Activated CD4-positive, alpha-beta T cell treated with anti-CD3 and anti-CD28 coated beads, Interleukin-2, amount 10 ng/mL, durations not matched to agents 7 days and 5 days (primary cell): ENCODE measurements at regions of chr2 and their contacts with region 1.

Region 1: DNA sequence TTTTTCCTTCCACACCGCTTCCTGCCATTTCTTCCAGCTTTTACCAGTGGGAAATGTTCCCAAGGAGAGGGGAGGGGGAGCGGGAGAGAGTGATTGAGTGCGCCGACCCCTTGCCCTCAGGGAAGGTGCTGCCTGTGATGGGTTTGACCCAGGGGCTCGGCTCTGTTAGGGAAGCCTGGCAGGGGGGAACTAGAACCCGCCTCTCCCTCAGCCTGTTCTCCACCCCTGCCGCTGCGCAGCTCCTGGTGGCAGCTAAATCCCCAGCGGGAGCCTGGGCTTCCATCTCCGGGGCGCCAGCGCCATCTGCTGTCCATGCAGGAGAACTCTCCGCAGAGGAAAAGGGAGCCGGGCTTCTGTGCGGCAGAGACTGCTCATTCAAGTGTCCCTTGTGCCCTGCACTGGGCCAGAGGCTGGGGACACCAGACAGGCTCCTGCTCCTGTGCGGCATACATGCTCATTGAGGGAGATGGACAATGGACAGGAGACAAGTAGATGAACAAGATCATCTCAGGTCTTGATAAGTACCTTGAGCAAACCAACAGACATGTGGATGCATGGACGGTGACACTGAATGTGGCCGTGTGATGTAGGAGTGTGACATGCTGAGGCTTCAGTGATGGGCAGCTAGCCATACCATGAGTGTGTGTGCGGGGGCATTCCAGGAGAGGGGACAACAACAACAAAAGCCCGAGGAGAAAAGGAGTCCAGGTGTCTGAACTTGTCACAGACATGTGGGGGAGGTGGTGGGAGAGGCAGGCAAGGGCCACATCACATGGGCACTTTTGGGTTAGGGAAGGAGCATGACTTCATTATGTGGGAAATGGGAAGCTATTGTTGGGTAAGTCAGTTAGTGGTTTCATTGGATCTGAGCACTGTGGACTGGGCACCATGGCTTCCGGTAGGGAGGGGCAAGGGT is 13.3 kb downstream of the CHPF start:
- DNase-seq: peak; percentile 87
- H3K4me3 Mint-ChIP-seq: no peak overlapping the region
- H3K27ac Mint-ChIP-seq: no peak overlapping the region
- H3K4me1 Mint-ChIP-seq: no peaks in the 10 kb centered on the region
- H3K27me3 Mint-ChIP-seq: peaks cover 49% of the 10 kb centered on the region

Region 2: GRCh38 chr2:219402665-219403515 is 127.4 kb before region 1 on chr2:
- CTCF ChIA-PET with region 1: interaction called, 20 read pairs
- POLR2A ChIA-PET with region 1: interaction called, 3 read pairs
- DNase-seq: peak; percentile 65
- H3K4me3 Mint-ChIP-seq: no peak overlapping the region
- H3K27ac Mint-ChIP-seq: no peak overlapping the region
- H3K4me1 Mint-ChIP-seq: no peaks in the 10 kb centered on the region
- H3K27me3 Mint-ChIP-seq: peaks cover 4% of the 10 kb centered on the region

Region 3: DNA sequence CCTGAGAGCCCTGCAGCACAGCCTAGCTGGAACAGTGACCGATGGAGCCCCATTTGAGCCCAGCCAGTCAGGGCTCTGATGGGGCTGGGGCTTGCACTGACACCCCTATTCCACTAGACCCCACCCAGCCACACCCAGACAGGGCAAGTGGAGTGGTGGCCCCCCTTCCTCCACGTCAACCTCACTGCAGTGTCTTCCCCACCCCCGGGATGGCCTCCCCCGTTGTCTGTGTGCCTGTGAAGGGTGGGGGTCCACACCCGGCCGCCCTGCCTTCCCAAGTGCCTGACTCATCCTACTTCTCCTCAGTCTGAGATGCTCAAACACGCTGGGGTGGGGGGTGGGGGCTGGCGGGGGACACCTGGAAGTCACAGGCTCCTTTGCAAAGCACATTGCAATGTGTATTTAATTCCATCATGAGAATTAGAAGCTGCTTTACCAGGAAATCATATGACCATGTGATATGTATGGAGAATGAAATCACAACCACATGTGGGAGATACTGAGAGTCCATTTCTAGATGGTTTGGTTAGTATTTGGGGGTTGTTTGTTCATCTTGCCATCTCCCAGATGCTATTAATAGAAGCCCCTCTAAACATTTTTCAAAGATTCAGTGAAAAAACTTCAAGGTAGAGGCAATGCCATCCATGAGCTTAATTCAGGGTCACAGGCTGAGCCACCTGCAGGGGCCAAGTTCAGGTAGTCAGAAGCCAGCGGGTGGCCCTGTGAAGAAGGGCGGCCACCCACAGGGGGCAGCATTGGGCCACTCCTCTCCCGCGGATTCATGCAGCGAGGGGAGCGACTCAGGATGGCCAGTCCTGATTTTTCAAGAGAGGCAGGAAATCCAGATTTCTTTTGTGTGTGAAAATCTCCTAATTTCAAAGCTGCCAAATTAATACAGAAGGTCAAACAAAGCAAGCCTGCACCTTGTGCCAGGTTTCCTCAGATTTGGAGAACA is 54.3 kb before region 1 on chr2:
- CTCF ChIA-PET with region 1: interaction called, 13 read pairs
- POLR2A ChIA-PET with region 1: no interaction called
- DNase-seq: peak; percentile 62
- H3K4me3 Mint-ChIP-seq: no peak overlapping the region
- H3K27ac Mint-ChIP-seq: no peak overlapping the region
- H3K4me1 Mint-ChIP-seq: peaks cover 4% of the 10 kb centered on the region
- H3K27me3 Mint-ChIP-seq: peaks cover 4% of the 10 kb centered on the region

Region 4: GRCh38 chr2:219492575-219492974 is 37.7 kb before region 1 on chr2:
- CTCF ChIA-PET with region 1: interaction called, 56 read pairs
- POLR2A ChIA-PET with region 1: no interaction called
- DNase-seq: no peak
- H3K4me3 Mint-ChIP-seq: no peak overlapping the region
- H3K27ac Mint-ChIP-seq: no peak overlapping the region
- H3K4me1 Mint-ChIP-seq: peaks cover 6% of the 10 kb centered on the region
- H3K27me3 Mint-ChIP-seq: peaks cover 44% of the 10 kb centered on the region

Region 5: DNA sequence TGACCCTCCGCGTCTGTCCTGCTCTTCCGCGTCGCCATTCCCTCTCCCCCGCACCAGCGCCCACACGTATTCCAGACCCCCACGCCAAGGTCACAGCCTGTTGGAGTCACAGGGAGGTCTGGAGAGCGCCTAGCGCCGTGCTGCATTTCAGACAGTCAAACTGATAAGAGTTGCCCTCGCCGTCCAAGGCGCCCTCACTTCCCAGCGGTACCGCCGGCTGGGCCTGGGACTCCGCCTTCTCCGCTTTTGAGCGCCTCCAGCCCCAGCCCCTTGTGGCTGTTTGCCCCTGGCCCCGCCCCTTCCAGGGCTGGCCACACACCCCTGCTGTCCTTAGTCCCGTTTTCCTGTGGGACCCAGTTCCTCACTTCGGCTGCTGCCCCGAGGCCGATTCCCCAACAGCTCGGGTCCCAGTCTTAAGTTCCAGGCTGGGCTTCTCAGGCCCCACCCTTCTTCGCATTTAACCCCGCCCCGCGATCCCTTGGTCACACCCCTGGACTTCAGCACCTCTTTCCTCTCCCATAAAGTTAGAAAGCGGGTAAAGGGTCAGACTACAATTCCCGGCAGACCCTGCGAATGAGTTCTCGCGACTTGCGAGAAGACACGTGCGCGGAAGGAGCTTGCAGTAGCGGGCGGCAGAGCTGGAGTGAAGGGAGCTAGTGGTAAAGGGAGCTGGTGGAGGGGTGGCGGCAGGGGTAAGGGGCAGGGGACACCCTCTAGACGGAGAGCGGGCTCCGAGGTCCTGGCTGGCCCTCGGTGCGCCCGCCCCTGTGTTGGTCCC is 31.8 kb before region 1 on chr2 and contains the start of gene GMPPA:
- CTCF ChIA-PET with region 1: interaction called, 56 read pairs
- POLR2A ChIA-PET with region 1: no interaction called
- DNase-seq: peak; percentile 97
- H3K4me3 Mint-ChIP-seq: peak within 1 kb of the TSS; percentile 85
- H3K27ac Mint-ChIP-seq: peak within 1 kb of the TSS; percentile 85
- H3K4me1 Mint-ChIP-seq: peaks cover 35% of the 10 kb centered on the region
- H3K27me3 Mint-ChIP-seq: peaks cover 40% of the 10 kb centered on the region
- total RNA-seq, gene GMPPA: 34.5 to 40.5 TPM

Region 6: DNA sequence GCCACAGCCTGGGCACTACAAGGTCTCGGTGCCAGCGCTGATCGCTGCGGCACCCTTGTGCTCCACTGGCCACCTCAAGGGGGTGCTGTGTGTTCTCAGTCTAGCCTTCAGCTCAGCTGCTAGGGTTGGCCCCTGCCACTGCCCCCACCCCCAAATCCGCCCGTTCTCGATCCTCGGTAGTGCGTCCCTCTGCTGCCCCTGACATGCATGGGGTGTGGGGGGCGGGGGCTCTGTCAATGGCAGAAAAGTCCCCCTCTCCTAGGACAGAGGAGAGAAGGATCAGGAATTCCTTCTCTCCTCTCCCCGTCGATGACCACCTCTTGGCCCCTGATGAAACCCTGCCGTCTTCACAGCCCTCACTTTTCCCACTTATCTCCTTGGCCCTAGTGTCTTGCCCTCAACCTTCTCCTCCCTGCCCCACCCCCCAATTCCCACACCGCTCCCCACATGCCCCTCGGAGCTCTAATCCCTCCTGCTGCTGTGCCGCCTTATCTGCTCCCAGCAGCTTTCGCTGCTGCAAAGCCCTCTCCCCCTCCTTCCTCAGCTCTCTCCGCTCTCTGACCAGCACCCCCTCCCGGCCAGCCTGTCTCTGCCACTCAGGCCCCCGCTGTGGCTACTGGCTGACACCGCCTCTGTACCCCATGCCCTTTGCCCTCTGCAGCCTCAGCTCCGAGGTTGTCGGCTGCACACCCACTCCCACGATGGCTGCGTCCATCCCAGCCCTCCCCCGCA is 20.4 kb before region 1 on chr2:
- CTCF ChIA-PET with region 1: interaction called, 11 read pairs
- POLR2A ChIA-PET with region 1: interaction called, 3 read pairs
- DNase-seq: peak; percentile 55
- H3K4me3 Mint-ChIP-seq: no peak overlapping the region
- H3K27ac Mint-ChIP-seq: no peak overlapping the region
- H3K4me1 Mint-ChIP-seq: peaks cover 11% of the 10 kb centered on the region
- H3K27me3 Mint-ChIP-seq: peaks cover 51% of the 10 kb centered on the region

Region 7: GRCh38 chr2:219543601-219544358 is 13.5 kb after region 1 on chr2 and contains the starts of genes CHPF and TMEM198:
- CTCF ChIA-PET with region 1: interaction called, 79 read pairs
- POLR2A ChIA-PET with region 1: no interaction called
- DNase-seq: peak; percentile 95
- H3K4me3 Mint-ChIP-seq: peak within 1 kb of the TSS; percentile 84
- H3K27ac Mint-ChIP-seq: peak within 1 kb of the TSS; percentile 89
- H3K4me1 Mint-ChIP-seq: peaks cover 24% of the 10 kb centered on the region
- H3K27me3 Mint-ChIP-seq: peaks cover 15% of the 10 kb centered on the region
- total RNA-seq, gene CHPF: 6.4 to 7.8 TPM
- total RNA-seq, gene TMEM198: 0.44 to 0.69 TPM

Region 8: DNA sequence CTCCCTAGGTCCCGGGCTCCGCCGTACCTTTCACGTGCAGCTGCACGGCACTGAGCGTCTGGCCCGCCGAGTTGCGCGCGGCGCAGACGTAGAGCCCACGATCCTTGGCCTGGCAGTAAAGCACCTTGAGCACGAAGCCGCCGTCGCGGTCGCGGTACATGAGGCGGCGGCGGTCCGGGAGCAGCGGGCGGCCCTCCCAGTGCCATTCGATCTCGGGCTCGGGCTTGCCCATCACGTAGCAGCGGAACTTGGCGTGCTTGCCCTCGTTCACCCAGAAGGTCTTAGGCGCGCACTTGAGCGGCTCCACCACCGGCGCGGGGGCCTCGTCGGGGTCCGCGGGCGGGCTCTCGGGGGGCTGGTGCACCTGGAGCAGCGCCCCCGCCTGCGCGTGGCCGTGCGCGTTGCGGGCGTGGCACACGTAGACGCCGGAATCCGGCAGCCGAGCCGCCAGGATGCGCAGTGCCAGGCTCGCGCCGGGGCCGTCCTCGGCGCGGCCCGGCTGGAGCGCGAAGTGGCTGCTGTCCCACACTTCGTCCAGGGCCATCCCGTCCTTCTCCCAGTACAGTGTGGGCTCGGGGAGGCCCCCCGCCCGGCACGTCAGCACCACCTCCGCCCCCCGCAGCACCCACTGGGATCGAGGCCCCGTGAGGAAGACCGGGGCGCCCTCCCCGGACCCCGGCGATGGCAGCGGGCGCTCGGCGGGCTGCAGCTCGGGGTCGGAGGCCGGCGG is 40.1 kb after region 1 on chr2:
- CTCF ChIA-PET with region 1: no interaction called
- POLR2A ChIA-PET with region 1: no interaction called
- DNase-seq: no peak
- H3K4me3 Mint-ChIP-seq: no peak overlapping the region
- H3K27ac Mint-ChIP-seq: no peak overlapping the region
- H3K4me1 Mint-ChIP-seq: no peaks in the 10 kb centered on the region
- H3K27me3 Mint-ChIP-seq: peaks cover 31% of the 10 kb centered on the region

Region 9: DNA sequence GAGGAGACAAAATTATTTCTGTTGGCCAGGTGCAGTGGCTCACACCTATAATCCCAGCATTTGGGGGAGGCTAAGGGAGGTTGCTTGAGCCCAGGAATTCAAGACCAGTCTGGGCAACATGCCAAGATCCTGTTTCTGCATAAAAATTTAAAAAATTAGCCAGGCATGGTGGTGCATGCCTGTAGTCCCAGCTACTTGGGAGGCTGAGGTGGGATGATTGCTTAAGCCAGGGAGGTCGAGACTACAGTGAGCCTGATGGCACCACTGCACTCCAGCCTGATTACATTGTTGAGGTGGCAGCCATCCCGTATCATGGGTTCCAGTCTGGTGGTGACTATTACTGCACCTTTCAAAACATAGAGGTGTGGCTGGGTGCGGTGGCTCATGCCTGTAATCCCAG is 51.1 kb after region 1 on chr2:
- CTCF ChIA-PET with region 1: no interaction called
- POLR2A ChIA-PET with region 1: no interaction called
- DNase-seq: no peak
- H3K4me3 Mint-ChIP-seq: no peak overlapping the region
- H3K27ac Mint-ChIP-seq: no peak overlapping the region
- H3K4me1 Mint-ChIP-seq: no peaks in the 10 kb centered on the region
- H3K27me3 Mint-ChIP-seq: peaks cover 9% of the 10 kb centered on the region

Region 10: GRCh38 chr2:219689676-219690628 is 159.6 kb after region 1 on chr2:
- CTCF ChIA-PET with region 1: no interaction called
- POLR2A ChIA-PET with region 1: no interaction called
- DNase-seq: peak; percentile 60
- H3K4me3 Mint-ChIP-seq: no peak overlapping the region
- H3K27ac Mint-ChIP-seq: no peak overlapping the region
- H3K4me1 Mint-ChIP-seq: peaks cover 10% of the 10 kb centered on the region
- H3K27me3 Mint-ChIP-seq: peaks cover 17% of the 10 kb centered on the region